ENCODE measurements at regions of chr11 and their contacts with region 1.

Region 1: DNA sequence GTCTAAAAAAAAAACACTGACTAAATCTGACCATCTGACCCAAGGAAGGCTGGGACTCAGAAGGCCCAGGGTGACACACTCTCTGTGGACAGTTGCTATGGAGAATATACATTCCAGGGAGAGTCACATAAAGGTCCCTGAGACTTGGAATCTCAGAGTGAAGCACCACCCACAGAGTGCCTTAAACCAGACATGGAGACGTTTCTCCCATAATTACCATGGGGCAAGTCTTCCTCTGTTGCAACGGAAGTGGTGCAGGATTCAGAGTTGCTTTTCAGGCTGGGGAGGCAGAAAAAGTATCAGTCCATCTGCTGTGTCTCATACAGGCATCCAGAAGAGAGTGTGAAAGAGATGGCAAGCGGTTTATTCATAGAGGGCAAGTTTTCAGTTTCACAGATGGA is 58.7 kb upstream of the SLN start:
- DNase-seq: no peak
- ATAC-seq: peak; percentile 52; the same call in 1 of the 2 replicates
- H3K4me3 ChIP-seq: no peak overlapping the region
- H3K27ac ChIP-seq: no peak overlapping the region
- H3K4me1 ChIP-seq: no peaks in the 10 kb centered on the region
- H3K27me3 ChIP-seq: no peaks in the 10 kb centered on the region
- CTCF ChIP-seq: no peak

Region 2: GRCh38 chr11:107563702-107564101 is 206.8 kb before region 1 on chr11:
- CTCF ChIA-PET with region 1: no interaction called
- POLR2A ChIA-PET with region 1: no interaction called
- in situ Hi-C with region 1: no loop called
- intact Hi-C with region 1: loop called (anchors 5 kb)
- DNase-seq: peak; percentile 67
- ATAC-seq: peak; percentile 3; the same call in 1 of the 2 replicates
- H3K4me3 ChIP-seq: peak overlapping the region in 1 of 2 experiments; percentile 16; a peak in 3 of 4 replicates
- H3K27ac ChIP-seq: peak overlapping the region; percentile 70
- H3K4me1 ChIP-seq: peaks cover 37% of the 10 kb centered on the region
- H3K27me3 ChIP-seq: no peaks in the 10 kb centered on the region
- CTCF ChIP-seq: peak; percentile 84

Region 3: DNA sequence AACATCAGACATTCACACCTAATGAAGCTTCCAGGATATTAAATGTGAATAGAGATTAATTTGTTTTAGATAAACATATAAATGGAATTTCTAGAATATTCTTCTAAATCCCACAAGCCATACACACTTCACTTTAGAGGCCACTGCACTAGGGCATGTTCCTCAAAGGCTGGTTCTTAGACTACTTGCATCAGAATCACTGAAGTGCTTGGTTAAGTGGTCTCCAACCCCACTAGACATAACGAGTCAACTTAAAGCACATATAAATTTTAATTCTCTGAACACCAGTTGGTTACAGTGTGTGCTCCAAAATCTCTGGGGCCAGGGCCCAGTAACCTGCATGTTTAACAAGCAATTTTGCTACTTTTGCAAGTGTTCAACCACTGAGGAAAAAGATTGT is 197.1 kb before region 1 on chr11:
- CTCF ChIA-PET with region 1: no interaction called
- POLR2A ChIA-PET with region 1: no interaction called
- in situ Hi-C with region 1: no loop called
- intact Hi-C with region 1: loop called (anchors 2 kb)
- DNase-seq: no peak
- ATAC-seq: no peak
- H3K4me3 ChIP-seq: no peak overlapping the region
- H3K27ac ChIP-seq: no peak overlapping the region
- H3K4me1 ChIP-seq: no peaks in the 10 kb centered on the region
- H3K27me3 ChIP-seq: no peaks in the 10 kb centered on the region
- CTCF ChIP-seq: no peak

Region 4: GRCh38 chr11:107590460-107591377 is 179.8 kb before region 1 on chr11 and contains the start of gene ELMOD1:
- CTCF ChIA-PET with region 1: no interaction called
- POLR2A ChIA-PET with region 1: interaction called, 18 read pairs
- in situ Hi-C with region 1: no loop called
- intact Hi-C with region 1: no loop called
- DNase-seq: no peak
- ATAC-seq: peak; percentile 88
- H3K4me3 ChIP-seq: peak within 1 kb of the TSS; percentile 58 to 59
- H3K27ac ChIP-seq: no peak within 1 kb of the TSS
- H3K4me1 ChIP-seq: peaks cover 7% of the 10 kb centered on the region; the same call in 1 of the 2 replicates
- H3K27me3 ChIP-seq: peaks cover 11% of the 10 kb centered on the region; the same call in 1 of the 2 replicates
- CTCF ChIP-seq: peak; percentile 61
- total RNA-seq, gene ELMOD1: 2.1 TPM